Heart right ventricle (tissue), 16 donors: ENCODE measurements at regions of chr2 and their contacts with region 1.

Region 1: GRCh38 chr2:4047961-4048891 is 344.9 kb downstream of the DCDC2C start:
- DNase-seq: no peak
- ATAC-seq: no peak
- H3K4me3 ChIP-seq: no peak overlapping the region
- H3K27ac ChIP-seq: no peak overlapping the region
- H3K4me1 ChIP-seq: no peaks in the 10 kb centered on the region
- H3K27me3 ChIP-seq: no peaks in the 10 kb centered on the region
- CTCF ChIP-seq: no peak

Region 2: GRCh38 chr2:4029081-4029480 is 19.1 kb before region 1 on chr2:
- intact Hi-C with region 1: loop called in 1 of 10 experiments (anchors 1 kb)
- DNase-seq: no peak
- ATAC-seq: no peak
- H3K4me3 ChIP-seq: no peak overlapping the region
- H3K27ac ChIP-seq: no peak overlapping the region
- H3K4me1 ChIP-seq: no peaks in the 10 kb centered on the region
- H3K27me3 ChIP-seq: no peaks in the 10 kb centered on the region
- CTCF ChIP-seq: no peak